ENCODE measurements at regions of chr9 and their contacts with region 1.

Region 1: DNA sequence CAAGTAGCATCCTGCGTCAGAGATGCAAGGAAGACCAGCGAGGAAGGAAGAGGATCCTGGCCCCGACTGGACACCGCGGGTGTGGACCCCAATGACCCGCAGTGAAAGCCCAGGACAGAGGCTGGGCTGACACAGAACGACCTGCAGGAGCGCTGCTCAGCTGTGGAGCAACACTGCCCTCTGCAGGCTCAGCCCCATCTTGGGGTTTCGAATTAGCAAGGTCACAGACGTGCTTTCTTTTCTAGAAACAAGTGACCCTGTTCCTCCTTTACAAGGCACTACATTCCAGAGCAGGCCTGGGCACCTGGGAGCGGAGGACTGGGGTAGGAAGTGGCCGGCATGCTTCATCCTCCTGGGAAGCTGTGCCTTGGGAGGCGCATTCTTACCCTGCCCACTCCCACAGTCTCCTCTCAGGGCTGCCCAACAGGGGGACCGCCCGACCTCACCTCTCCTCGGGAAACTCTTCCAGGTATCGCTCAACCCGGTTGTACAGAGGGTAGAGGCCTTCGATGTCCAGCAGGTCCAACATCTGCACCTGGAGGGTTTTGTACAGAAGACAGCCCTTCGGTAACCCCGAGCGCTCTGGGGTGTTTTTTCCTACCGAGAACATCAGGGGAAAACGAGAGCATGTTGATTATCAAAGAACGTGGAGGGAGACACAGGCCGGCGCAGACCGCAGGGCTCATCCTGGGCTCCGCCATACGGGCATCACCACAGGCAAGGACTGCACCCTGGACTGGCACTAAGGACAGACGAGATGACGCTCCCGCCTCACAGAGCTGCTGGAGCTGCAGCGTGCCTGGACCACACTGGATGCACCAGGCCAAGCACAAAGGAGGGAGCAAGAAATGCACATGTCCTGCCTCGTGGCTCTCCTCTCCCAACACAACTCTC is 35.0 kb downstream of the IPPK start:
- DNase-seq: peak; percentile 83
- CTCF ChIP-seq: peak; percentile 88

Region 2: DNA sequence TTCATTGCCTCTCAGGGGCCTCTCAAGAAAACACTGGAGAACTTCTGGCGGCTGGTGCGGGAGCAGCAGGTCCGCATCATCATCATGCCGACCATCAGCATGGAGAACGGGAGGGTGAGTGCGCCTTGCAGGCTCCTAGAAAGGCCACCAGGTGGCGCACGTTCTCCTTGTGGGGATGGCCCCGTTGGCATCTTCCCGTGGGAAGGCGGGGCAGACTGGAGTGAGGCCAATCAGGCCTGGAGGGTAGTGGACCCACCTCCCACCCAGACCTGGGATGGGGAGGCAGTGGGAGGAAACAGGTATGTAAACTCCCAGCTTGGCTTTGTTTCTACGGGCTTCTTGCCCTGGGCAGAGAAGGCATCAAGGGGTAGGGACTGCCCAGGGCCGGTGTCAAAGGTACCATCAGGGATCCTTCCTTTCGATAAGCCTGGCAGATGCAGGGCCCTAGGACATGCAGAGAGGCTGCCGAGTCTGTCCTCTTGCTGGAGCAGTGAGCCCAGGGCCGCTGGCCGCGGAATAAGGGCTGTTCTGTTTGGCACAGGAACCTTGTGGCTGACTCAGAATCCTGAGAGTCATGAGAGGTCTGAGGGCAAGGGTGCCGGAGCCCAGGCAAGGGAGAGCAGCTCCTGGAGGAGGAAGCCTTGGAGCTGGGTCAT is 500.9 kb before region 1 on chr9:
- CTCF ChIA-PET with region 1: interaction called, 132 read pairs
- POLR2A ChIA-PET with region 1: no interaction called
- DNase-seq: peak; percentile 83
- CTCF ChIP-seq: peak; percentile 96

Region 3: GRCh38 chr9:92325269-92325990 is 309.5 kb before region 1 on chr9 and contains the starts of genes CENPP and NOL8:
- CTCF ChIA-PET with region 1: interaction called, 16 read pairs
- POLR2A ChIA-PET with region 1: no interaction called
- DNase-seq: peak; percentile 89
- CTCF ChIP-seq: no peak

Measured in GM10248 (cell line).